ENCODE measurements at regions of chr11 and their contacts with region 1.

Region 1: DNA sequence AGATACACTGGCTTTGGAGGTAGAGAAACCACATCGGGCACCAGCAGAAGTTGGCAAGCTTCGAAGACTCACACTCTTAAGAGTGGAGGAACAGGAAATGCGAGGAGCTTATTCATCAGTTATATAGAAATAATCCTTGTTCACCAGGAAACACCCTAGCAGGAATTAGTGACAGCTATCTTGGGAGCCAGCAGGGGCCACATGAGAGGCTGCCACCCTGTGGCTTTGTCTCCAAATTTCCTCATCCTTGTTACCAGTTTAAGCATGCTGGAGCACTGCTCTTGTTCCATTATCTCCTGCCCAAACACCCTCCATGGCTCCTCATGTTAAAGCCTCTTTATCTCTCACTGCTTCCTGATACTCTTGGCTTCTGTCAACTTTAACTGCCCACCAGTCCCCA is 131.0 kb downstream of the PLEKHA7 start:
- DNase-seq: no peak
- ATAC-seq: peak; percentile 75
- H3K4me3 ChIP-seq: no peak overlapping the region
- H3K27ac ChIP-seq: no peak overlapping the region
- H3K4me1 ChIP-seq: no peaks in the 10 kb centered on the region
- H3K27me3 ChIP-seq: no peaks in the 10 kb centered on the region
- CTCF ChIP-seq: peak; percentile 44

Region 2: GRCh38 chr11:16785520-16786128 is 97.5 kb before region 1 on chr11:
- CTCF ChIA-PET with region 1: no interaction called
- POLR2A ChIA-PET with region 1: interaction called, 11 read pairs
- in situ Hi-C with region 1: no loop called
- intact Hi-C with region 1: no loop called
- DNase-seq: no peak
- ATAC-seq: peak; percentile 84
- H3K4me3 ChIP-seq: no peak overlapping the region
- H3K27ac ChIP-seq: no peak overlapping the region
- H3K4me1 ChIP-seq: peaks cover 4% of the 10 kb centered on the region; the same call in 1 of the 2 replicates
- H3K27me3 ChIP-seq: no peaks in the 10 kb centered on the region
- CTCF ChIP-seq: peak; percentile 91

Region 3: DNA sequence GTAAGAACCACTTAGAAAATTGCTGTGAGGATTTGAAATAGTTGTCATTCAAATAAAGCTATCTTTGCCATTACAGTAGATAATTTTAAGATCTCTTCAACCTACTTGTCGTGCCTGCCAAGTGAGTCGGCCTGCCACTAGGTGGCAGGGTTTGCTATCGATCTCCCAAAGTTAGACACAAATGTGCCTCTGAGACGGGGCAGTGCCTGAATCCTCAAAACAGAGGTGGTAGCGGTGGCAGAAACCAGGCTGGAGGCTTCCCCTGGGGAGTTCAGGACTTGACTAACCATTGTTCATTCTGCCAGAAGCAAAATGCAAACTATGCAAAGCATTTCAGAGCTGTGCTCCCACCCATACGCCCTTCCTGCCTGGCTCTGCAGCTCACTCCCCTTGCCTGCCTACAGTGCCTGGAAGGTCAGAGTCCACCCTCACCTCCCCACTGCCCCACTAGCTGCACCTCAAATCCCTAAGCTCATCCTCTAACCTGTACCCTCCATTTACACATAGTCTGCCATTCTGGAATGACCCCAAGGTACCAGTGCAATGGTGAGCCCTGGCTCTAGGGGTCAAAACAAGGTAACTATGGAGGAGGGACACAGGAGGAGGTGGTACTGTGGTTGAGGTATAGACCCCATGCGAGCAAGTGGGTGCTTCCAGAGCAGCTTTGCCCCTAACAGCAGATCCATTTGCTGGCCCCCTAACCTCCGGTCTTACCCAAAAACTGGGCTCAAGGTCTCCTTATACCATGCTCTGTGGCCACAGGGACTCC is 62.7 kb before region 1 on chr11:
- CTCF ChIA-PET with region 1: interaction called, 4 read pairs
- POLR2A ChIA-PET with region 1: interaction called, 3 read pairs
- in situ Hi-C with region 1: no loop called
- intact Hi-C with region 1: loop called (anchors 2 kb)
- DNase-seq: peak; percentile 46
- ATAC-seq: peak; percentile 93
- H3K4me3 ChIP-seq: no peak overlapping the region
- H3K27ac ChIP-seq: no peak overlapping the region
- H3K4me1 ChIP-seq: no peaks in the 10 kb centered on the region
- H3K27me3 ChIP-seq: no peaks in the 10 kb centered on the region
- CTCF ChIP-seq: peak; percentile 91

Measured in Panc1 (cell line).